Heart right ventricle (tissue), 16 donors: ENCODE measurements at regions of chr13 and their contacts with region 1.

Region 1: DNA sequence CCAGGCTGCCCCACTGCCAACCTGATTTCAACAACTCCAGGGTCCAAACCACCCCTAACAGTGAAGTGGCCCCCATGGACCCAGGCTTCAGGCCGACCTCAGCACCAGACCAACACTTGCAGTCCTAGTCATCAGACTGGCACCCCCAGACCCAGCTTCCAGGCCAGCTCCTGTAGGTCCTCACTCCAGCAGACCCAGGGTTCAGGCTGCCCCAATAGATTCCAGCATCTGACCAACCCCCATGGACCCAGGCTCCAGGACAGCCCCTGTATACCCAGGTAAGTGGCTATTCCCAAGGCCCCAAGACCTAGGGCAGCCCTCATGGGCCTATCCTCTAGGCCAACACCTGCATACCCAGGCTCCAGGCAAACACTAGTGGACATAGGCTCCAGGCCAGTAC is 193.8 kb upstream of the OBI1 start:
- DNase-seq: no peak
- ATAC-seq: no peak
- H3K4me3 ChIP-seq: no peak overlapping the region
- H3K27ac ChIP-seq: no peak overlapping the region
- H3K4me1 ChIP-seq: no peaks in the 10 kb centered on the region
- H3K27me3 ChIP-seq: no peaks in the 10 kb centered on the region
- CTCF ChIP-seq: no peak

Region 2: GRCh38 chr13:78910147-78910546 is 57.4 kb after region 1 on chr13:
- intact Hi-C with region 1: loop called in 1 of 10 experiments (anchors 10 kb)
- DNase-seq: no peak
- ATAC-seq: no peak
- H3K4me3 ChIP-seq: no peak overlapping the region
- H3K27ac ChIP-seq: no peak overlapping the region
- H3K4me1 ChIP-seq: no peaks in the 10 kb centered on the region
- H3K27me3 ChIP-seq: no peaks in the 10 kb centered on the region
- CTCF ChIP-seq: no peak

Region 3: GRCh38 chr13:78958006-78958405 is 105.3 kb after region 1 on chr13:
- intact Hi-C with region 1: no loop called
- DNase-seq: no peak
- ATAC-seq: no peak
- H3K4me3 ChIP-seq: no peak overlapping the region
- H3K27ac ChIP-seq: no peak overlapping the region
- H3K4me1 ChIP-seq: no peaks in the 10 kb centered on the region
- H3K27me3 ChIP-seq: peaks cover 0 to 10% (median 0%) of the 10 kb centered on the region in 7 donors
- CTCF ChIP-seq: no peak